ENCODE measurements at regions of chr2 and their contacts with region 1.

Region 1: GRCh38 chr2:53422979-53423378 is 344.6 kb upstream of the CHAC2 start:
- DNase-seq: peak; percentile 60
- H3K4me3 Mint-ChIP-seq: no peak overlapping the region
- H3K27ac Mint-ChIP-seq: no peak overlapping the region
- H3K4me1 Mint-ChIP-seq: no peaks in the 10 kb centered on the region
- H3K27me3 Mint-ChIP-seq: no peaks in the 10 kb centered on the region

Region 2: DNA sequence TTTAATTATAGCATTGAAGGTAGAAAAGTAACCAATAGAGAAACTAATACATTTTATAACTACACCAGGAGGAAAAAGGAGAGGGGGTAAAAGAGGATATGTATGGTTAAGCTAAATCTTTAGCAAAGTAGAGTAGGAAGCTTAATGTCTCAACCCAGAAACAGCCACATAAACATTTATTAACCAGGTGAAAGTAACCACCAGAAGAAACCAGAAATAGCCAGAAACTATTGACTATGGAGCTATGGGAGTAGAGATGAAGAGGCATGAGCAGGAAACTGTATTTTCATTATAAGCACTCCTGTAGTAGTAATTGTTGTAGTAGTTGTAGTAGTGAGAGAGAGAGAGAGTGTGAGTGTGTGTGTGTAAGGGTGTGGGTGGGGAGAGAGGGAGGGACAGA is 272.8 kb before region 1 on chr2:
- intact Hi-C with region 1: no loop called
- DNase-seq: no peak
- H3K4me3 Mint-ChIP-seq: no peak overlapping the region
- H3K27ac Mint-ChIP-seq: no peak overlapping the region
- H3K4me1 Mint-ChIP-seq: no peaks in the 10 kb centered on the region
- H3K27me3 Mint-ChIP-seq: no peaks in the 10 kb centered on the region

Region 3: GRCh38 chr2:53740170-53740569 is 317.2 kb after region 1 on chr2:
- intact Hi-C with region 1: loop called (anchors 10 kb)
- DNase-seq: no peak
- H3K4me3 Mint-ChIP-seq: no peak overlapping the region
- H3K27ac Mint-ChIP-seq: no peak overlapping the region
- H3K4me1 Mint-ChIP-seq: peaks cover 8% of the 10 kb centered on the region
- H3K27me3 Mint-ChIP-seq: no peaks in the 10 kb centered on the region